Activated CD4-positive, alpha-beta memory T cell treated with anti-CD3 and anti-CD28 coated beads, Interleukin-2, amount 10 ng/mL, durations not matched to agents 7 days and 5 days (primary cell): ENCODE measurements at regions of chr3 and their contacts with region 1.

Region 1: GRCh38 chr3:47164007-47164881 is at the start of gene SETD2:
- DNase-seq: peak; percentile 89
- H3K4me3 Mint-ChIP-seq: peak within 1 kb of the TSS; percentile 92
- H3K27ac Mint-ChIP-seq: peak within 1 kb of the TSS; percentile 98
- H3K4me1 Mint-ChIP-seq: peaks cover 48% of the 10 kb centered on the region
- H3K27me3 Mint-ChIP-seq: no peaks in the 10 kb centered on the region
- total RNA-seq, gene SETD2: 37.4 to 41.5 TPM

Region 2: GRCh38 chr3:47016934-47017435 is 147.3 kb before region 1 on chr3:
- CTCF ChIA-PET with region 1: no interaction called
- POLR2A ChIA-PET with region 1: interaction called, 13 read pairs
- DNase-seq: peak; percentile 62
- H3K4me3 Mint-ChIP-seq: no peak overlapping the region
- H3K27ac Mint-ChIP-seq: peak overlapping the region; percentile 80
- H3K4me1 Mint-ChIP-seq: peaks cover 58% of the 10 kb centered on the region
- H3K27me3 Mint-ChIP-seq: no peaks in the 10 kb centered on the region

Region 3: DNA sequence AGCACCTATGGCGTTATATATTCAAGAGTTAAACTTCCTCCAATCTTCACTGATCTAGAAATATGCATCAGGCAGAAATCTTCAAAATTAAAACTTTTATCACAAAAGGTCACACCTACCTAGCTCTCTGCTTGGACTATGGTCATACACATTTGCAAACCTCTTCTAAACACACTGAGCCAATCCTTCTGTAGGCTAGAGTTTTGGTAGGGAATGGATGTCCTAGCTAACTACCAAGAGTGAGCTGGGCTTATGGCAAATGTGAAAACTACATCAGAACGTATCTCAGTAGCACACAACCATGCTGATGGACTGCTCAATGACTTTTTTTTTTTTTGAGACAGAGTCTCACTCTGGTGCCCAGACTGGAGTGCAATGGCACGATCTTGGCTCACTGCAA is 29.9 kb before region 1 on chr3:
- CTCF ChIA-PET with region 1: no interaction called
- POLR2A ChIA-PET with region 1: interaction called, 11 read pairs
- DNase-seq: no peak
- H3K4me3 Mint-ChIP-seq: no peak overlapping the region
- H3K27ac Mint-ChIP-seq: no peak overlapping the region
- H3K4me1 Mint-ChIP-seq: peaks cover 14% of the 10 kb centered on the region
- H3K27me3 Mint-ChIP-seq: no peaks in the 10 kb centered on the region

Region 4: GRCh38 chr3:47324278-47324865 is 160.1 kb after region 1 on chr3:
- CTCF ChIA-PET with region 1: interaction called, 10 read pairs
- POLR2A ChIA-PET with region 1: no interaction called
- DNase-seq: peak; percentile 56
- H3K4me3 Mint-ChIP-seq: no peak overlapping the region
- H3K27ac Mint-ChIP-seq: no peak overlapping the region
- H3K4me1 Mint-ChIP-seq: peaks cover 8% of the 10 kb centered on the region
- H3K27me3 Mint-ChIP-seq: no peaks in the 10 kb centered on the region

Region 5: DNA sequence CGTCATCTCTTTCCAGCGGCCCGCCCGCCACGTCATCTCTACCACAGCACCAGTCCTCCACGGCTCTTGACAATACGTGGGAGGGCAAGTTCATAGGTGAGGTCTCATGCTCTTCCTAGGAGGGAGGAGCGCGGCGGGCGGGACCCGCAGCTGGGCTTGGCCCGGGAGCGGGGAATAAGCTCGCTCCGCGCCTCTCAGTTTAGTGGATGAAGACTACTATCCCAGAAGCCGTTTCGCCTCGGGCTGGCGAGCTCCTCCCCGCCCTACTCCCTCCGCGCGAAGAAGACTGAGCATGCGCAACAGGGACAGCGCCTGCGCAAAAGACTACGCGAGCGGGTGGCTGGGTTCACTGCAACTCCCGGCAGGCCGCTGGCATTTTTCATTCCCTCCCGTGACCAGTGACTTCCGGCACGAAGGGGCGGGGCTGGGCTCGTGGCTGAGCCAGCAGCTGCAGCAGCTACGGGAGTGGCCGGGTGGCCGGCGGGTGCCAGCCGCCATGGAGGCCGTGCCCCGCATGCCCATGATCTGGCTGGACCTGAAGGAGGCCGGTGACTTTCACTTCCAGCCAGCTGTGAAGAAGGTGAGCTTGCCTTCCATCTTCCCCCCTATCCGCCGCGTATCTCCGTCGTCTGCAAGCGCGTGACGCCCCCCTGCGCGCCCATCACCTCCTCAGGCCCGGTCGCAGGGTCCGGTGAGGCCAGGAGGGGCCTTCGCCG is 216.5 kb after region 1 on chr3 and contains the start of gene PTPN23:
- CTCF ChIA-PET with region 1: interaction called, 5 read pairs
- POLR2A ChIA-PET with region 1: interaction called, 16 read pairs
- DNase-seq: peak; percentile 99
- H3K4me3 Mint-ChIP-seq: peak within 1 kb of the TSS; percentile 99
- H3K27ac Mint-ChIP-seq: peak within 1 kb of the TSS; percentile 98
- H3K4me1 Mint-ChIP-seq: peaks cover 52% of the 10 kb centered on the region
- H3K27me3 Mint-ChIP-seq: no peaks in the 10 kb centered on the region
- total RNA-seq, gene PTPN23: 26.8 to 28.7 TPM